ENCODE measurements at regions of chr10 and their contacts with region 1.

Region 1: DNA sequence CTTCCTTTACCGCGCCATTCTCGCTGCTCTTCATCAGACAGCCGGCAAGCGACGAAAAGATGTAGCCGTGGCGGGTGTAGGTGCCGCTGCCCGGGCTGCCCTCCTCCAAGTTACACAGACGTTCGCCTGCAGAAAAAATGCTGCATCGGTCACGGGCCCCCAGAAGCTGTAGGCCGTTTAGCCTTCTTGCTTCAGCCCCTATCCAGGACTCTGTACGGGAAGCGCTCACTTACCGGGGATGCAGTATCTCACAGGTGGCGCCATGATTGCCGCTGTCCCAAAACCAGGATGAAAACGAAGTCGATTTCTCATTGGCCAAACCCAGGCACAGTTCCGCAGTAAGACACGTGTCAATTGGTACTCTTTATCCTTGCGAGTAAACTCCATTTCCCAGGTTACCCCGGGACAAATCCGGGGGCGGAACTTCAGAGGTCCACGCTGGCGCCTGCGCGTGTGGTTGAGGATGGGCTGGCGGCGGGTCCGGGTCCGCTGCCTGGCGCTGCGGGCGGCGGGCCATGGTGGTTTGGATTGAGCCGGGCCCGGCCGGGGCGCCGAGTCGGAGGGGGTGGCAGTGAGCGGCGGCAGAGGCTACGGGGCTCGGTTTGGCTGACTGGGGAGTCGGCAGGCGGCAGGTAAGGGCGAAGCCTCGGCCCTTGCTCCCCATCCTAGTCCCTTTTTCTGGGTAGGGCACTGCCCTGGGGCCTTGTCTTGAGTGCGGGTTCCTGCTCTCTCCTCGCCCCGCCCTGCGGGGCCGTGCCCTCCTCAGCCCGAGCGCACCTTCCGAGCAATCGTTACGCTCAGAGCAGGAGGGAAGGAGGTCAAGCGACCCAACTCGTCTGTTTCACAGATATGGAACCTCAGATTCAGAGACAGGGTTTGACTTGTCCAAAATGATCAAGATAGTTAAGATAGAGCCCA is at the starts of genes EXOSC1 and ZDHHC16:
- DNase-seq: peak; percentile 92
- H3K4me3 Mint-ChIP-seq: peak within 1 kb of the TSS; percentile 93
- H3K27ac Mint-ChIP-seq: peak within 1 kb of the TSS; percentile 92
- H3K4me1 Mint-ChIP-seq: peaks cover 47% of the 10 kb centered on the region
- H3K27me3 Mint-ChIP-seq: no peaks in the 10 kb centered on the region
- total RNA-seq, gene EXOSC1: 55.3 and 57.1 TPM in 2 replicates
- total RNA-seq, gene ZDHHC16: 48.3 and 48.8 TPM in 2 replicates

Region 2: GRCh38 chr10:97292097-97292862 is 153.7 kb before region 1 on chr10 and contains the start of gene ARHGAP19:
- intact Hi-C with region 1: loop called (anchors 1 kb)
- DNase-seq: peak; percentile 92
- H3K4me3 Mint-ChIP-seq: peak within 1 kb of the TSS; percentile 91
- H3K27ac Mint-ChIP-seq: peak within 1 kb of the TSS; percentile 92
- H3K4me1 Mint-ChIP-seq: peaks cover 22% of the 10 kb centered on the region
- H3K27me3 Mint-ChIP-seq: peaks cover 3% of the 10 kb centered on the region
- total RNA-seq, gene ARHGAP19: 27.1 and 27.8 TPM in 2 replicates

Region 3: GRCh38 chr10:97407211-97407951 is 38.6 kb before region 1 on chr10:
- intact Hi-C with region 1: loop called (anchors 1 kb)
- DNase-seq: peak; percentile 55
- H3K4me3 Mint-ChIP-seq: peak overlapping the region; percentile 57
- H3K27ac Mint-ChIP-seq: peak overlapping the region; percentile 46
- H3K4me1 Mint-ChIP-seq: peaks cover 11% of the 10 kb centered on the region
- H3K27me3 Mint-ChIP-seq: no peaks in the 10 kb centered on the region

Region 4: GRCh38 chr10:97425964-97426775 is 19.8 kb before region 1 on chr10 and contains the start of gene PGAM1:
- intact Hi-C with region 1: loop called (anchors 1 kb)
- DNase-seq: peak; percentile 98
- H3K4me3 Mint-ChIP-seq: peak within 1 kb of the TSS; percentile 94
- H3K27ac Mint-ChIP-seq: peak within 1 kb of the TSS; percentile 99
- H3K4me1 Mint-ChIP-seq: peaks cover 46% of the 10 kb centered on the region
- H3K27me3 Mint-ChIP-seq: peaks cover 2% of the 10 kb centered on the region
- total RNA-seq, gene PGAM1: 967 and 979 TPM in 2 replicates

Region 5: DNA sequence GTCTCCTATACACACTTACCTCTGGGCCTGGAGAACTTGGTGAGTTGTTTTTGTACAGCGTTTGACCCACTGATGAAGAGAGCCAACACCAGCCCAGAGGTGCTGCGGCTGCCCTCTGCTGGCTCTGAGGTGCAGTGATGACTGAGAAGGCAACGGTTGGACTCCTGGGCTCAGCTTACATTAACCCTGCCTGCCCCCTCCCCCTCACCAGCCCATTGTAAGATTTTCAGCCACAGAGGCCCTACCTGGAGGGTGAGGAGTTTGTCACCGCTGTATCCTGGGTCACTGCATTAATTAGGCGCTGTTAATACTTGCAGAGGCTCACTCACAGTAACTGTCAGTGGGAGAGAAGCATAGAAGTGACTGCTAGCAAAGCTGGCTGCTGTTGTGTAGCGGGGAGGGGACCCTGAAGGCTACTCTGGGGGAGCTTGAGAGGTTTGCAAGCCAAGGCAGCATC is 107.6 kb after region 1 on chr10:
- intact Hi-C with region 1: loop called (anchors 1 kb)
- DNase-seq: peak; percentile 52
- H3K4me3 Mint-ChIP-seq: no peak overlapping the region
- H3K27ac Mint-ChIP-seq: no peak overlapping the region
- H3K4me1 Mint-ChIP-seq: no peaks in the 10 kb centered on the region
- H3K27me3 Mint-ChIP-seq: peaks cover 4% of the 10 kb centered on the region

Region 6: GRCh38 chr10:97640174-97640867 is 194.3 kb after region 1 on chr10 and contains the start of gene PI4K2A:
- intact Hi-C with region 1: loop called (anchors 2 kb)
- DNase-seq: peak; percentile 99
- H3K4me3 Mint-ChIP-seq: peak within 1 kb of the TSS; percentile 96
- H3K27ac Mint-ChIP-seq: peak within 1 kb of the TSS; percentile 86
- H3K4me1 Mint-ChIP-seq: peaks cover 23% of the 10 kb centered on the region
- H3K27me3 Mint-ChIP-seq: peaks cover 1% of the 10 kb centered on the region
- total RNA-seq, gene PI4K2A: 19.3 and 19.7 TPM in 2 replicates

Measured in activated T-helper 1 cell treated with anti-CD3 and anti-CD28 coated beads, Interleukin-12 subunit alpha, Interleukin-12 subunit beta, Interleukin-2, Interleukin-4 antibody, amounts not matched to agents 30 ng/mL and 10 ng/mL and 1 ng/mL, durations not matched to agents 14 hours and 24 hours and 36 hours (primary cell).